IMR-90 (cell line): ENCODE measurements at regions of chr18 and their contacts with region 1.

Region 1: DNA sequence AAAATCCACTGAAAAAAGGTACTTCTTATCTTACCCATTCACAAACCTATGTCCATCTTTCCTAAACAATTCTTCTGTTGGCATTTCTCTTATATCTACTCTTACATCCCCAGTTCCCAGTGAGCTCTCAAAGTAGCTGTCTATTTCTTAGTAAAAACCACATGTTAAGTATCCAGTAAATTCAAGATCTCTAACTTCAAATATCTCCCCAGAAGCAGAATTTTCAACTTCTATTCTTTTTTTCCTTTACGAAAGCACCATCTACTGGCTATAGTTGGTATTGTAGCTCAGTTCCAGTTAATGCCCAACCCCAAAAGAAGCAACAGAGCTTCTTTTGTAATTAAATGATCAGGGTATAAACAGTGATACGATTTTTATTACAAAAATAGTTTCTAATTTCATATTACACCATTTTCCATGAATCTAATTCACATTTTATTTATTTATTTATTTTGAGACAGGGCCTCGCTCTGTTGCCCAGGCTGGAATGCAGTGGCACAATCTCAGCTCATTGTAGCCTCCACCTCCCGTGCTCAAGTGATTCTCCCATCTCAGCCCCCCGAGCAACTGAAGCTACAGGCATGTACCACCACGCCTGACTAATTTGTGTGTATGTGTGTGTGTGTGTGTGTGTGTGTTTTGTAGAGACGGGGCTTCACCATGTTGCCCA is 28.5 kb downstream of the HRH4 start:
- DNase-seq: peak; percentile 41
- ATAC-seq: peak; percentile 68
- H3K4me3 ChIP-seq: no peak overlapping the region
- H3K27ac ChIP-seq: no peak overlapping the region
- H3K4me1 ChIP-seq: peaks cover 2% of the 10 kb centered on the region
- H3K27me3 ChIP-seq: peaks cover 15% of the 10 kb centered on the region
- CTCF ChIP-seq: peak; percentile 74
- POLR2A ChIP-seq: no peak
- RAD21 ChIP-seq: peak; percentile 56

Region 2: DNA sequence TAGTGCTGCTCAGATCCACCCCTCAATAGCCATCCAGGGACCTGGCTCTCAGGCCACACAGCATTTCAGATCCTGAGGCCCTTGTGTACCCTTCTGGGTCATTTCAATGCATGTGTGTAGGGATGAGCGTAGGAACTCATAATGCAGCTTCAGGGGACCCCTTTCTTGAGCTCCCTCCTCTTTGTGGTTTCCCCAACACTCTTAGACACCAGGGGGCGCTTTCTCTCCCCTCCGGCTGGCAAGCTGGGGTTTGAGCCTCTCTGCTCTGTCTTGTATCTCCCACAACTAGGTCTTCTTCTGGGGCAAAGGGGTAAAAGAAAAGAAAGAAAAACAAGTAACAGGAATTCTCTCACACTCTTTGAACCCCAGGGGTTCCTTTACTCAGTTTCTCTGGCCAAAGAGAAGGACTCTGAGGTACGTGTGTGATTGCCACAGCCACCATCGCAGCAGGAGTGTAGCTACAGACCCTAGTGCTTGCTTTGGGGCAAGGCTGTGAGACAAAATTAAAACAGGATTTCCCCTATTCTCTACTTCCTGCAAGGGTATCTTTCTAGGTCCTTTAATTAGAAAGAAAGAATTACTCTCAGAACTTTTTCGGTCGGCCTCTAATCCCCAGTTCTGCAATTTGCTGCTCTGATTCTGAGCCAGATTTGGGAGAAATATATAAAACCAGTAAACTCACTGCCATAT is 312.1 kb before region 1 on chr18:
- CTCF ChIA-PET with region 1: interaction called, 4 read pairs
- POLR2A ChIA-PET with region 1: no interaction called
- dilution Hi-C with region 1: no loop called
- in situ Hi-C with region 1: no loop called
- intact Hi-C with region 1: loop called (anchors 5 kb)
- DNase-seq: peak; percentile 56
- ATAC-seq: peak; percentile 68
- H3K4me3 ChIP-seq: no peak overlapping the region
- H3K27ac ChIP-seq: no peak overlapping the region
- H3K4me1 ChIP-seq: no peaks in the 10 kb centered on the region
- H3K27me3 ChIP-seq: no peaks in the 10 kb centered on the region
- CTCF ChIP-seq: peak; percentile 64
- POLR2A ChIP-seq: no peak
- RAD21 ChIP-seq: peak; percentile 65

Region 3: GRCh38 chr18:24446953-24447538 is 41.9 kb before region 1 on chr18:
- CTCF ChIA-PET with region 1: interaction called, 4 read pairs
- POLR2A ChIA-PET with region 1: no interaction called
- dilution Hi-C with region 1: no loop called
- in situ Hi-C with region 1: no loop called
- intact Hi-C with region 1: loop called (anchors 2 kb)
- DNase-seq: no peak
- ATAC-seq: no peak
- H3K4me3 ChIP-seq: no peak overlapping the region
- H3K27ac ChIP-seq: no peak overlapping the region
- H3K4me1 ChIP-seq: no peaks in the 10 kb centered on the region
- H3K27me3 ChIP-seq: no peaks in the 10 kb centered on the region
- CTCF ChIP-seq: 0 out of 2 replicates have a peak, but pooled peaks have one; percentile 16
- POLR2A ChIP-seq: no peak
- RAD21 ChIP-seq: no peak

Region 4: GRCh38 chr18:24600076-24600654 is 111.2 kb after region 1 on chr18:
- CTCF ChIA-PET with region 1: no interaction called
- POLR2A ChIA-PET with region 1: no interaction called
- dilution Hi-C with region 1: no loop called
- in situ Hi-C with region 1: no loop called
- intact Hi-C with region 1: loop called (anchors 1 kb)
- DNase-seq: peak; percentile 75
- ATAC-seq: peak; percentile 79
- H3K4me3 ChIP-seq: no peak overlapping the region
- H3K27ac ChIP-seq: no peak overlapping the region
- H3K4me1 ChIP-seq: peaks cover 2% of the 10 kb centered on the region; the same call in 1 of the 2 replicates
- H3K27me3 ChIP-seq: peaks cover 24% of the 10 kb centered on the region
- CTCF ChIP-seq: peak; percentile 83
- POLR2A ChIP-seq: no peak
- RAD21 ChIP-seq: peak; percentile 83

Region 5: GRCh38 chr18:24726727-24727492 is 238.0 kb after region 1 on chr18:
- CTCF ChIA-PET with region 1: interaction called, 14 read pairs
- POLR2A ChIA-PET with region 1: no interaction called
- dilution Hi-C with region 1: no loop called
- in situ Hi-C with region 1: no loop called
- intact Hi-C with region 1: loop called (anchors 2 kb)
- DNase-seq: peak; percentile 86
- ATAC-seq: peak; percentile 86
- H3K4me3 ChIP-seq: no peak overlapping the region
- H3K27ac ChIP-seq: peak overlapping the region; percentile 51; the same call in 1 of the 2 replicates
- H3K4me1 ChIP-seq: peaks cover 10% of the 10 kb centered on the region
- H3K27me3 ChIP-seq: no peaks in the 10 kb centered on the region; the same call in 1 of the 2 replicates
- CTCF ChIP-seq: peak; percentile 92
- POLR2A ChIP-seq: 0 out of 2 replicates have a peak, but pooled peaks have one; percentile 24
- RAD21 ChIP-seq: peak; percentile 95